ENCODE measurements at regions of chr7 and their contacts with region 1.

Region 1: GRCh38 chr7:132318352-132319318 is 257.6 kb downstream of the PLXNA4 start:
- DNase-seq: peak; percentile 87
- H3K4me3 ChIP-seq: peak overlapping the region in 1 of 2 experiments; percentile 7; a peak in 1 of 4 replicates
- H3K27ac ChIP-seq: no peak overlapping the region
- H3K4me1 ChIP-seq: peaks cover 0 to 39% of the 10 kb centered on the region in 2 experiments; a peak in 2 of 4 replicates
- H3K27me3 ChIP-seq: no peaks in the 10 kb centered on the region; the same call in 1 of the 2 replicates
- CTCF ChIP-seq: peak; percentile 99
- EP300 ChIP-seq: 0 out of 4 replicates have a peak, but pooled peaks of 1 of the 2 experiments have one; percentile 23
- RAD21 ChIP-seq: peak; percentile 100

Region 2: GRCh38 chr7:132183781-132184420 is 134.7 kb before region 1 on chr7:
- CTCF ChIA-PET with region 1: no interaction called
- POLR2A ChIA-PET with region 1: no interaction called
- DNase-seq: no peak
- H3K4me3 ChIP-seq: no peak overlapping the region
- H3K27ac ChIP-seq: no peak overlapping the region
- H3K4me1 ChIP-seq: no peaks in the 10 kb centered on the region; a peak in 1 of 4 replicates
- H3K27me3 ChIP-seq: no peaks in the 10 kb centered on the region
- CTCF ChIP-seq: no peak
- EP300 ChIP-seq: no peak
- RAD21 ChIP-seq: no peak

Region 3: DNA sequence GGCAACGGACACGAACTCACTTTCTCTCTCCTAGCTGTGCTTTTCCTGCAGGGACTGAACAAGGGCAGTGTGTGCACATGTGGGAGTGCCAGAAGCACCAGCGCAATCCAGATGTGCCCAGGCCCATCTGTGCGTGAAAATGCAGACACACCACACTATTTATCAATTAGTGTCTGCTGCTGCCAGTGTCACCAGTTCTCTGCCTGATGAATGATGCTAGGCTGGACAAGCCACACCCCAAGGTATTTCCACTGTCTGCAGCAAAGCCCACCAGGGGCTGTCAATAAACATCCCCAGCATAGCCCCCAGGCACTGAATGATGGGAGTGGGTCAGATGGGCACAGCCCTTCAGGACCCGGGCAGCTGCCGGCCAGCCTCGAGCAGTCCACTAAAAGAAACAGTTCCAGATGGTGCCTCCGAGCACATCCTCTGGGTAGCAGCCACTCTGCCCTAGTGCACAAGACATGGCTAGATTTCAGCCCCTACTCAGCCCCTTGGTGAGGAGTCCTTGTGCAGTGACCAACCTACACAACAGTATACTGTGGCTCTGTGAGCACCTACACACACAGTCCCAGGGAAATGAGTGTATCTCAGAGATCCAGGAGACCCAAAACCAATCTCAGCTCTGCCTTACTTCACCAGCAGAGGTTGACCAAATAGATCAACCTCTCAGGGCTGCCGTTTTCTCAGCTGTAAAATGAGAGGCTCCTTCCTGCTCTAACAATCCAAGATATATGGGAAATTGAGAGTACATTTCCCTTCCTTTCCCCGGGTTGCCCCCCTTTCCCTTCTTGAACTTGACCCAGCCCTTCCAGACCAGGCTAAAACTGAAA is 57.1 kb before region 1 on chr7:
- CTCF ChIA-PET with region 1: no interaction called
- POLR2A ChIA-PET with region 1: no interaction called
- DNase-seq: peak; percentile 78
- H3K4me3 ChIP-seq: no peak overlapping the region
- H3K27ac ChIP-seq: peak overlapping the region in 1 of 2 experiments; percentile 39; a peak in 2 of 4 replicates
- H3K4me1 ChIP-seq: peaks cover 0 to 30% of the 10 kb centered on the region in 2 experiments; a peak in 1 of 4 replicates
- H3K27me3 ChIP-seq: 0 out of 2 replicates have a peak, but pooled peaks cover 7% of the 10 kb centered on the region
- CTCF ChIP-seq: no peak
- EP300 ChIP-seq: peak in 1 of 2 experiments; percentile 85; a peak in 2 of 4 replicates
- RAD21 ChIP-seq: no peak

Region 4: GRCh38 chr7:132276976-132277725 is 41.5 kb before region 1 on chr7:
- CTCF ChIA-PET with region 1: interaction called, 12 read pairs
- POLR2A ChIA-PET with region 1: interaction called, 3 read pairs
- DNase-seq: no peak
- H3K4me3 ChIP-seq: no peak overlapping the region
- H3K27ac ChIP-seq: no peak overlapping the region
- H3K4me1 ChIP-seq: peaks cover 0 to 14% of the 10 kb centered on the region in 2 experiments; a peak in 1 of 4 replicates
- H3K27me3 ChIP-seq: no peaks in the 10 kb centered on the region
- CTCF ChIP-seq: no peak
- EP300 ChIP-seq: no peak
- RAD21 ChIP-seq: no peak

Region 5: DNA sequence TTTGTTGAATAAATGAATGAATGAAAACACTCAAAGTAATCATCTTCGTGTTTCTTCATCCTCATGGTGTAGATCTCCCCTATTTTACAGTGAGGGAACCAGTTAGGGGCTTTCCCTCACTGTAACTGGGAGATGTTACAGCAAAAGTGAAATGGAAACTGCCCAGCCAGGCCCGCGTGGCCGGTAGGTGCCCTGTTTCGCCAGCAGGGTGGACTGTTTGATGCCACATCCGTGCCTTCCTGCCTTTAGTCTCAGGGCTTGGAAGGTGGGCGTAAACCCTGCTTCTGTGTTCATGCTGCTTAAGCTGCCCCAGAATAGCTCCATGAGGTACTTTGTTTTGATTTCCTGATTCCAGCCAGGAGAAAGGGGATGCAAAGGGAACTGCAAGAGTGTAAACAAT is 11.2 kb before region 1 on chr7:
- CTCF ChIA-PET with region 1: interaction called, 56 read pairs
- POLR2A ChIA-PET with region 1: no interaction called
- DNase-seq: peak; percentile 44
- H3K4me3 ChIP-seq: no peak overlapping the region
- H3K27ac ChIP-seq: no peak overlapping the region
- H3K4me1 ChIP-seq: peaks cover 0 to 17% of the 10 kb centered on the region in 2 experiments; a peak in 1 of 4 replicates
- H3K27me3 ChIP-seq: no peaks in the 10 kb centered on the region
- CTCF ChIP-seq: peak; percentile 37
- EP300 ChIP-seq: no peak
- RAD21 ChIP-seq: peak; percentile 18; the same call in 1 of the 2 replicates

Region 6: GRCh38 chr7:132386201-132386681 is 67.6 kb after region 1 on chr7:
- CTCF ChIA-PET with region 1: interaction called, 12 read pairs
- POLR2A ChIA-PET with region 1: no interaction called
- DNase-seq: peak; percentile 72
- H3K4me3 ChIP-seq: no peak overlapping the region
- H3K27ac ChIP-seq: peak overlapping the region in 1 of 2 experiments; percentile 86; a peak in 2 of 4 replicates
- H3K4me1 ChIP-seq: peaks cover 0 to 60% of the 10 kb centered on the region in 2 experiments; a peak in 2 of 4 replicates
- H3K27me3 ChIP-seq: no peaks in the 10 kb centered on the region
- CTCF ChIP-seq: no peak
- EP300 ChIP-seq: peak in 1 of 2 experiments; percentile 59; a peak in 2 of 4 replicates
- RAD21 ChIP-seq: no peak; the same call in 1 of the 2 replicates

Region 7: GRCh38 chr7:132518102-132518838 is 199.6 kb after region 1 on chr7:
- CTCF ChIA-PET with region 1: interaction called, 15 read pairs
- POLR2A ChIA-PET with region 1: no interaction called
- DNase-seq: peak; percentile 52
- H3K4me3 ChIP-seq: no peak overlapping the region
- H3K27ac ChIP-seq: no peak overlapping the region
- H3K4me1 ChIP-seq: no peaks in the 10 kb centered on the region
- H3K27me3 ChIP-seq: no peaks in the 10 kb centered on the region
- CTCF ChIP-seq: peak; percentile 62
- EP300 ChIP-seq: no peak
- RAD21 ChIP-seq: peak; percentile 40

Region 8: GRCh38 chr7:132580717-132581285 is 262.2 kb after region 1 on chr7:
- CTCF ChIA-PET with region 1: interaction called, 440 read pairs
- POLR2A ChIA-PET with region 1: no interaction called
- DNase-seq: peak; percentile 84
- H3K4me3 ChIP-seq: no peak overlapping the region
- H3K27ac ChIP-seq: no peak overlapping the region
- H3K4me1 ChIP-seq: peaks cover 0 to 17% of the 10 kb centered on the region in 2 experiments; a peak in 2 of 4 replicates
- H3K27me3 ChIP-seq: peaks cover 13% of the 10 kb centered on the region; the same call in 1 of the 2 replicates
- CTCF ChIP-seq: peak; percentile 96
- EP300 ChIP-seq: 0 out of 4 replicates have a peak, but pooled peaks of 1 of the 2 experiments have one; percentile 23
- RAD21 ChIP-seq: peak; percentile 98

Region 9: DNA sequence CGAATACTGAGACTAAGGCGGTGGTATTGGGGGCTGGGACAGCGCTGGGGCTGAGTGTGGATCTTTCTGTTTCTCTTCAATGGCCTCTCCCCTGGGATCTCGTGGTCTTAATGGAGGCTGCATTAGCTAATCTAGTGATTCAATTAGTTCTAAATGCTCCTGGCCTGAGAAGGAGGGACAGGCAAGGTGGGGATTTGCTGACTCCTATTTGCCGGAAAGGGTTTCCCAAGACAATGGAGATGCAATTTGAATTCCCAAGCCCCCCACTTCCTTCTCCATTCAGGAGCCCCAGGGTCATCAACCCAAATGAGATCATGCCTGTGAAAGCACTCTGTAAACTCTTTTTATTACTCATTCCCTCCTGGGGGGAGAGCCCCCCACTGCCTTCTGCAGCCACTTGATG is 369.3 kb after region 1 on chr7:
- CTCF ChIA-PET with region 1: no interaction called
- POLR2A ChIA-PET with region 1: no interaction called
- DNase-seq: peak; percentile 38
- H3K4me3 ChIP-seq: no peak overlapping the region
- H3K27ac ChIP-seq: no peak overlapping the region
- H3K4me1 ChIP-seq: peaks cover 0 to 5% of the 10 kb centered on the region in 2 experiments; a peak in 1 of 4 replicates
- H3K27me3 ChIP-seq: peaks cover 5% of the 10 kb centered on the region; the same call in 1 of the 2 replicates
- CTCF ChIP-seq: no peak
- EP300 ChIP-seq: no peak
- RAD21 ChIP-seq: no peak

Region 10: DNA sequence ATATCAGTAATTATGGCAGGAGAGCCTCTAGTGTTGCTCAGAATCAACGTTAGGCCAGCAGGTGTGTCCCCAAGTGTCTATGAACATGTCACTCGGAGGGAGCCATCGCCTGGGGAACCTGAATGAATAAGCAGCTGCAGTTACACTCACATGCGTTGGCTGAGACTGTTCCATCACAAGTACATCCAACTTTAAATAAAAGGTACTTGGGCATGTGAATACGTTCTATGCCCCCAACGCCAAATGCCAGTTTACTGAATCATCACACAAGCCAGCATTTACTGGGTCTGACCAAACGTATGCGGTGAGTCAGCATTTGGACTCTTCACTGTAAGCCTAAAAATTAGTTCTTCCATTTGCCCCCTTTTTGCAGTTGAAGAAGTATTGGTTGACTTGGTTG is 465.2 kb after region 1 on chr7:
- CTCF ChIA-PET with region 1: no interaction called
- POLR2A ChIA-PET with region 1: no interaction called
- DNase-seq: no peak
- H3K4me3 ChIP-seq: peak overlapping the region in 1 of 2 experiments; percentile 18; a peak in 1 of 4 replicates
- H3K27ac ChIP-seq: peak overlapping the region in 1 of 2 experiments; percentile 78; a peak in 2 of 4 replicates
- H3K4me1 ChIP-seq: peaks cover 7 to 9% of the 10 kb centered on the region in 2 experiments
- H3K27me3 ChIP-seq: no peaks in the 10 kb centered on the region
- CTCF ChIP-seq: no peak
- EP300 ChIP-seq: peak; percentile 9 to 77; a peak in 2 of 4 replicates
- RAD21 ChIP-seq: no peak